ENCODE measurements at regions of chr22 and their contacts with region 1.

Region 1: DNA sequence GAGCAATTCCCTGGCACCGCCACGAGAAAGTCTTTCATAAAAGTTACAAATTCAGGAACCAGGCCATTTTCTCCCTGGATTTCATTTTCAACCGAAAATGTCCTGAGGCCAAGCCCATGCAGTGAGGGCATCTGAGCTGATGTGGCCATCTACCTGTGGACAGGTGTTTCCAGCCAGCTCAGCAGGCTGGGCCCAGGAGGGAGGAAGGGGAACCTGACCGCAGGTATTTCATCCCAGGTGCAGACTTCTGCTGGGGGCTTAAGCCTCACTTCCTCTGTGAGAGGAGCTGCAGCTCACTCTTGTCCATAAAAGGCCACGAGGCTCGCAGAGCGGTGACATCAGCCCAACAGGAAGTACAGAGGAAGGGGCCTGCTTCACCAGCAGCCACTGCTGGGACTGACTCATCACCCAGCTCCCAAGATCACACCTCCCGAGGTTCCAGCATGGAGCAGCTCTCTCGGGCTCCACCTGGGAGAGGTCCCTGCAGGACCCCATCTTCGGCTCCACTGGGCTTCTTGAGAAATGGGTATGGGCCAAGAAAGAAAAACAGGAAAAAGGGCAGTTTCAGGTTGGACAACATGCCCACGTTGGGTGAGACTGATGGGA is 56.4 kb downstream of the MYH9 start:
- DNase-seq: peak; percentile 67 to 88
- ATAC-seq: peak; percentile 38 to 62; a peak in 5 of 6 replicates
- H3K4me3 ChIP-seq: no peak overlapping the region
- H3K27ac ChIP-seq: peak overlapping the region; percentile 96 to 99
- H3K4me1 ChIP-seq: peaks cover 99% of the 10 kb centered on the region
- CTCF ChIP-seq: no peak
- EP300 ChIP-seq: 0 out of 5 replicates have a peak, but pooled peaks of 1 of the 2 experiments have one; percentile 15
- POLR2A ChIP-seq: no peak
- RAD21 ChIP-seq: no peak

Region 2: GRCh38 chr22:36387752-36388518 is 56.5 kb after region 1 on chr22 and contains the start of gene MYH9:
- CTCF ChIA-PET with region 1: interaction called, 3 read pairs
- POLR2A ChIA-PET with region 1: interaction called, 13 read pairs
- DNase-seq: peak; percentile 92 to 98
- ATAC-seq: peak; percentile 88 to 93
- H3K4me3 ChIP-seq: peak within 1 kb of the TSS; percentile 100
- H3K27ac ChIP-seq: peak within 1 kb of the TSS; percentile 100
- H3K4me1 ChIP-seq: peaks cover 34% of the 10 kb centered on the region
- CTCF ChIP-seq: no peak
- EP300 ChIP-seq: no peak
- POLR2A ChIP-seq: peak; percentile 97
- RAD21 ChIP-seq: no peak
- polyA plus RNA-seq, gene MYH9: 92.1 and 162 TPM in 2 replicates

Measured in A549 (cell line).